Calu3 (cell line): ENCODE measurements at regions of chr1 and their contacts with region 1.

Region 1: DNA sequence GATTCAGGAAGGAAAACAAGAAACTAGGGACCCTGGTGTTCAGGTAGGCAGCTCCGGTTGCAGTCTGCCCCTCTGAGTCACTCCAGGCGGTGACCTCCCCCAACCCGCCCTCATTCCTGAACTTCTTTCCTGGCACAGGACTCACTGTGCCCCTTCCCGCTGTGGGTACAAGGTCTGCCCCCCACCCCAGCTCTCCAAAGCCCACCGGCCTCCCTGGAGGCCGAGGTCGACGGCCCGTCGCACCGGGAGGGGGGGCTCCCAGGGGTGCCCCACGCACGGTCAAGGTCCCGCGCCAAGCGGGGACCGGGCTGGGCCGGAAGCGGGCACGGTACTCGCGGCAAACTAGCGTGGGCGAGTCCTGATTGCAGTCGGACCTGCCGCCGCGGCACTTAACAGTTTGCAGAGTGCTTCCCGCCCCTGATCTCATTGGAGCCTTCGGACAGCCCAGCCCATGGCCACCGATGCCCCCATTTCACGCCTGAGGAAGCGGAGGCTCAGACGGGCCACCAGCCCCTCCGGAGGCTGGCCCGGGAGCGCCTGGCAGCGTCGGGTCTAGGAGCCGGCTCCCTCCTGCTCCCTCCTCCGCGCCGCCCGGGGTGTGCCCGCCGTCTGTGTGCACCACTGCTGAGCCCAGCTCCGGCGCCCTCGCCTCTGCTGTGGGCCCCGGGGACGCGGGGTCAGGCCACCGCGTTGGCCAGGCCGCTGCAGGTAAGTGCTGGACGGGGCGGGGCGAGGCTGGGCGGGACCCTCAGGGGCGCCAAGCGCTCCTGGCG is at the start of gene GJB3:
- DNase-seq: peak; percentile 74
- H3K4me3 Mint-ChIP-seq: peak within 1 kb of the TSS; percentile 88
- H3K27ac Mint-ChIP-seq: peak within 1 kb of the TSS; percentile 90
- H3K4me1 Mint-ChIP-seq: peaks cover 56% of the 10 kb centered on the region
- H3K27me3 Mint-ChIP-seq: no peaks in the 10 kb centered on the region
- CTCF ChIP-seq: no peak
- total RNA-seq, gene GJB3: 23.1 and 23.5 TPM in 2 replicates

Region 2: DNA sequence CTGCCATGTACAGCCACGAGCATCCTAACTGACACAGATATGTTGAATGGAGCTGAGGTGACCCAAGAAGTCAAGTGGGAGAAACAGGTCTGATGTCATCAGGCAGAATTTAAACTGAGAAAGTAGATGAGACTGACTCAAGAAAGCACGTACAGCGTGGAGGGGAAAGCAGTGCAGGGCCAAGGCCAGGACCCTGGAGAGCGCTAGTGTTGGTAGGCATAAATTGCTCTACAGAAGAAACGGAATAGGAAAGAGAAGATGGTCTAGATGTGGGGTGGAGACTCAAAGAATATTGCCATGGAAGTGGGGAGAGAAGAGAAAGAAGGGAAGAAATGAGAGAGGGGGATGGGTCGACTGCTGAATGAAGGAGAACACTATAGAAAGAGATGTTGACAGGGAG is 71.7 kb before region 1 on chr1:
- CTCF ChIA-PET with region 1: no interaction called
- intact Hi-C with region 1: no loop called
- DNase-seq: no peak
- H3K4me3 Mint-ChIP-seq: no peak overlapping the region
- H3K27ac Mint-ChIP-seq: no peak overlapping the region
- H3K4me1 Mint-ChIP-seq: no peaks in the 10 kb centered on the region
- H3K27me3 Mint-ChIP-seq: peaks cover 72% of the 10 kb centered on the region
- CTCF ChIP-seq: no peak

Region 3: GRCh38 chr1:34763142-34763781 is 18.0 kb before region 1 on chr1:
- CTCF ChIA-PET with region 1: interaction called, 10 read pairs
- intact Hi-C with region 1: loop called (anchors 2 kb)
- DNase-seq: peak; percentile 53
- H3K4me3 Mint-ChIP-seq: peak overlapping the region; percentile 37
- H3K27ac Mint-ChIP-seq: no peak overlapping the region
- H3K4me1 Mint-ChIP-seq: peaks cover 31% of the 10 kb centered on the region
- H3K27me3 Mint-ChIP-seq: no peaks in the 10 kb centered on the region
- CTCF ChIP-seq: no peak

Region 4: GRCh38 chr1:34907487-34908090 is 126.3 kb after region 1 on chr1:
- CTCF ChIA-PET with region 1: no interaction called
- intact Hi-C with region 1: no loop called
- DNase-seq: no peak
- H3K4me3 Mint-ChIP-seq: no peak overlapping the region
- H3K27ac Mint-ChIP-seq: no peak overlapping the region
- H3K4me1 Mint-ChIP-seq: no peaks in the 10 kb centered on the region
- H3K27me3 Mint-ChIP-seq: peaks cover 78% of the 10 kb centered on the region
- CTCF ChIP-seq: no peak